Brain microvascular endothelial cell (primary cell): ENCODE measurements at regions of chr3 and their contacts with region 1.

Region 1: DNA sequence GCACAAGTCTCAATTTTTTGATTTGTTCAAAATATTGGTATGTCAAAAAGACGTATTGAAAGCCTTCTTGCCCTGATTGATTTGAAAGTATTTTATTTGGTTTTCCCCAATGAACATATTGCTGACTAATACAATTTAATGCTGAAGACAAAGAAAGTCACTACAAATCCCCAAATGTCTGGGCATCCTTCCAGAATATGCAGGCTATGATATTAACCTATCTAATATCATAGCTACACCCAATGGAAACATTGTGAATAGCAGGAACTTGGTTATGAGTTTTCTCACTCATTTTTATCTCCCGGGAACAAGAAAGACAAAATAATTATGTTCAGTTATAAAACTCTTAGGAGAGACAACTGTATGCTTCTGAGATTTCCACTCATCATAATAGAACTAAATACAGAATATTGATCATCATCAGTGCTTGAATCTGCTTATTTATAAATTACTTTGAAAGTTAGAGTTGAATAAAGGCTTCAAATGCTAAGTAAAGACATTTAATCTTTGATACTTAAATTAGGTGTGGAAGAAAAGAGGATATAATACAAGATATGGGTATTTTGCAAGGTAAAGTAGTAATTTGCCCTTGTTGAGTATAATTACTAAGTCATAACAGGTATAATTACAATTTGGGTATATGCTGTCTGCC is 483.9 kb downstream of the RBMS3 start:
- DNase-seq: peak; percentile 88
- H3K4me3 ChIP-seq: no peak overlapping the region
- H3K27ac ChIP-seq: peak overlapping the region; percentile 8
- H3K27me3 ChIP-seq: no peaks in the 10 kb centered on the region
- CTCF ChIP-seq: peak; percentile 51

Region 2: GRCh38 chr3:29280404-29281093 is 484.2 kb before region 1 on chr3 and contains the start of gene RBMS3:
- in situ Hi-C with region 1: loop called (anchors 25 kb)
- DNase-seq: peak; percentile 88
- H3K4me3 ChIP-seq: peak within 1 kb of the TSS; percentile 78
- H3K27ac ChIP-seq: peak within 1 kb of the TSS; percentile 93
- H3K27me3 ChIP-seq: no peaks in the 10 kb centered on the region
- CTCF ChIP-seq: peak; percentile 75